ENCODE measurements at regions of chr3 and their contacts with region 1.

Region 1: DNA sequence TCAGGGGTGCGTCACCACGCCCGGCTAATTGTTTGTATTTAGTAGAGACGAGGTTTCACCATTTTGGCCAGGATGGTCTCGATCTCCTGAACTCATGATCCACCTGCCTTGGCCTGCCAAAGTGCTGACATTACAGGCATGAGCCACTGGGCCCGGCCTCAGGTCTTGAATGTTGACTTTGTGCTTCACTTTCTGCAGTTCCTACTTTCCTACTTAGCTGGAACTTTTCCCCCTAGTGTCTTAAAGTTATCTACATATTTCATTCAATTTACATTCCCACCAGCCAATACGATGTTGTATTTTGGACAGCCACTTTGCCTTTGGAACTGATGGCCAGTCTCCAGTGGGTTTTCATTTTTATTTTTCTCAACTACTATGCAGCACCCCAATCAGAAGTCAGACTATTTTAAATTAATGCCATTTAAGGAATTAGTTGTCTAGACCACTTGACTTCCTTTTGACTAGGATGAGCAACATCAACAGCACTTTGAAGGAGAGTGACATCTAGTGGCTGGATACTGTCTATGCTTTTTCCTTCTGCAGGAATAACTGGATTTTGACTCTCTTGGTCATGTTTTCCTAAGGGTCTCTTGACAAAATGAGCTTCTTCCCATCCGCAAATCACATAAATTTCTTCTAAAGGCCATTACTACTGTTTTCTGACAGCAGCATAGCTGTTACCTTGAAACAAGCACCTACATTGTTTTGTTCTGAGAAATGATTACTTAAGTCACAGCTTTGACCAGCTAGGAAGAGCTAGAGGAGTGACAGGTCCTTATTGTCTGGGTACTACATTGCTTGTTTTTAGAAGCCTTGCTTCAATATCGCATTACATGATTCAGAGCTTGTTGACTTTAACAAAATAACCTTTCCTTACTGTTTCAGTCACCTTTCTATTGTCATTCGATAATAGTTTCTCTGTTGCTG is 140.2 kb downstream of the ITPR1 start:
- DNase-seq: peak in 2 of 35 experiments; percentile 23 to 71
- ATAC-seq: peak in 3 of 4 experiments; percentile 58 to 70 (median 60)
- H3K4me3 ChIP-seq: no peak overlapping the region
- H3K4me3 Mint-ChIP-seq: no peak overlapping the region
- H3K27ac ChIP-seq: no peak overlapping the region
- H3K27ac Mint-ChIP-seq: peak overlapping the region; percentile 4 to 48
- H3K4me1 ChIP-seq: no peaks in the 10 kb centered on the region
- H3K4me1 Mint-ChIP-seq: peaks cover 7 to 8% (median 7%) of the 10 kb centered on the region in 3 donors
- H3K27me3 ChIP-seq: no peaks in the 10 kb centered on the region
- H3K27me3 Mint-ChIP-seq: no peaks in the 10 kb centered on the region

Region 2: GRCh38 chr3:4350789-4351163 is 282.6 kb before region 1 on chr3:
- CTCF ChIA-PET with region 1: interaction called, 25 to 48 read pairs
- POLR2A ChIA-PET with region 1: interaction called, 3 to 4 read pairs
- DNase-seq: peak in 33 of 35 experiments; percentile 8 to 87 (median 44)
- ATAC-seq: peak; percentile 80 to 92 (median 85)
- H3K4me3 ChIP-seq: peak overlapping the region in 1 of 2 donors; percentile 45
- H3K4me3 Mint-ChIP-seq: peak overlapping the region; percentile 27 to 70 (median 62)
- H3K27ac ChIP-seq: peak overlapping the region; percentile 50
- H3K27ac Mint-ChIP-seq: peak overlapping the region in 1 of 2 donors; percentile 13
- H3K4me1 ChIP-seq: no peaks in the 10 kb centered on the region
- H3K4me1 Mint-ChIP-seq: peaks cover 7 to 15% (median 15%) of the 10 kb centered on the region in 3 donors
- H3K27me3 ChIP-seq: no peaks in the 10 kb centered on the region
- H3K27me3 Mint-ChIP-seq: no peaks in the 10 kb centered on the region

Region 3: DNA sequence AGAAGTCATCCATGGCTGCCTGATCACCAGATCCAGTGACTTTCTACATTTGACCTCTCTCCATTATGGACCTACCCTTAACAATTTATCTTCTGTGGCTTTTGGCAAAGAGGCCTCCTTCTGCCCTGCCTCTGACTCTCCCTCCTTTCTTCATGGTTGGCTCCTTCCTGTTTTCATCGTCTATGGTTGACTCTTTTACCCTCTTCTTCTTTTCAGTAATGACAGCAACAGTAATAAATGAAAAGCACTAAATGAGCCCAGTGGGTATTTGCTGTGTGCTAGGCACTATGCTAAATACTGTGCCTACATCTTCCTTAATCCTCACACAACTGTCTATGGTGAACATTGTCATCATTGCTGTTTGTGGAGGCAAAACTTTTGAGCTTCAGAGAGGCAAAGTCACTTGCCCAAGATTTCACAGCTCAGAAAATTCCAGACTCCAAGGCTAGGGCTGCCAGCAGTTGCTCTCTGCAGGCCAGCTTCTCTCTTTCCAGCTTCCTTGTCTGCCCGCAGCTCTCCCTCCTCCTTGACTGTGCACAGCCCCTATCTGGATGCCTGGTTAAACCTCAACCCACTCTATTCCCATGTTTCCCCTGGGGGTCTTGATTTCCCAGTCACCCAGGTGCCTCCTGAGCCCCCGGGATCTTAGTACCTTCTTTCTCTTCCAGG is 115.6 kb before region 1 on chr3:
- CTCF ChIA-PET with region 1: interaction called, 5 to 15 read pairs
- POLR2A ChIA-PET with region 1: no interaction called
- DNase-seq: no peak
- ATAC-seq: peak in 2 of 4 experiments; percentile 14 to 35
- H3K4me3 ChIP-seq: no peak overlapping the region
- H3K4me3 Mint-ChIP-seq: peak overlapping the region in 1 of 3 donors; percentile 63
- H3K27ac ChIP-seq: peak overlapping the region; percentile 85
- H3K27ac Mint-ChIP-seq: peak overlapping the region; percentile 76 to 90
- H3K4me1 ChIP-seq: peaks cover 15 to 25% of the 10 kb centered on the region in 2 experiments
- H3K4me1 Mint-ChIP-seq: peaks cover 47 to 50% (median 48%) of the 10 kb centered on the region in 3 donors
- H3K27me3 ChIP-seq: no peaks in the 10 kb centered on the region
- H3K27me3 Mint-ChIP-seq: no peaks in the 10 kb centered on the region

Region 4: GRCh38 chr3:4615750-4616149 is 17.6 kb before region 1 on chr3:
- CTCF ChIA-PET with region 1: interaction called in 1 of 2 experiments, 3 read pairs
- POLR2A ChIA-PET with region 1: interaction called in 1 of 2 experiments, 11 read pairs
- DNase-seq: no peak
- ATAC-seq: no peak
- H3K4me3 ChIP-seq: no peak overlapping the region
- H3K4me3 Mint-ChIP-seq: no peak overlapping the region
- H3K27ac ChIP-seq: no peak overlapping the region
- H3K27ac Mint-ChIP-seq: no peak overlapping the region
- H3K4me1 ChIP-seq: no peaks in the 10 kb centered on the region
- H3K4me1 Mint-ChIP-seq: peaks cover 6 to 18% (median 13%) of the 10 kb centered on the region in 3 donors
- H3K27me3 ChIP-seq: no peaks in the 10 kb centered on the region
- H3K27me3 Mint-ChIP-seq: no peaks in the 10 kb centered on the region

Region 5: DNA sequence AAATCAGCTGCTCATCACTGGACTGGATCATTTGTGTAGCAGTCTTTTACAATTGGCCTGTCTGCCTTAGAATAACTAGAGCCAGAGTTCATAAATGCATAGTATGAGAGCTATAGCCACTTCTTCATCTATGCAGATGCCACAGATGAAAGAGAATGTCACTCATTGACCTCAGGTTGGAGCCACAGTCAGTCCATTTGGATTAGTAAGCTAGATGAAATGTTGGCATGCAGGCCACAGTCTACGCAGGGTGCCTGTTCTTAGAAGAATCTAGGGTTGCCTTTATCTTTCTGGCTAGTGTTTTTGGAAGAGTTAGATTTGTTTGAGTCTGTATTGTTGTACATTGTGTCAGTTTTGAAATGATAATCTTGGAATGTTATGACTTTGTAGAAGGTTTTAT is 528.8 kb after region 1 on chr3:
- CTCF ChIA-PET with region 1: no interaction called
- POLR2A ChIA-PET with region 1: interaction called in 1 of 2 experiments, 10 read pairs
- DNase-seq: no peak
- ATAC-seq: no peak
- H3K4me3 ChIP-seq: no peak overlapping the region
- H3K4me3 Mint-ChIP-seq: peak overlapping the region in 1 of 3 donors; percentile 3
- H3K27ac ChIP-seq: no peak overlapping the region
- H3K27ac Mint-ChIP-seq: peak overlapping the region in 1 of 2 donors; percentile 15
- H3K4me1 ChIP-seq: peaks cover 7 to 11% of the 10 kb centered on the region in 2 experiments
- H3K4me1 Mint-ChIP-seq: peaks cover 75 to 80% (median 78%) of the 10 kb centered on the region in 3 donors
- H3K27me3 ChIP-seq: no peaks in the 10 kb centered on the region
- H3K27me3 Mint-ChIP-seq: no peaks in the 10 kb centered on the region